Activated CD4-positive, alpha-beta T cell treated with anti-CD3 and anti-CD28 coated beads, Interleukin-2, amount 10 ng/mL, durations not matched to agents 24 days and 14 days (primary cell): ENCODE measurements at regions of chr12 and their contacts with region 1.

Region 1: GRCh38 chr12:89960011-89960507 is 251.4 kb upstream of the ATP2B1 start:
- DNase-seq: peak; percentile 63
- H3K4me3 Mint-ChIP-seq: peak overlapping the region; percentile 39
- H3K27ac Mint-ChIP-seq: no peak overlapping the region
- H3K4me1 Mint-ChIP-seq: peaks cover 12% of the 10 kb centered on the region
- H3K27me3 Mint-ChIP-seq: peaks cover 10% of the 10 kb centered on the region

Region 2: DNA sequence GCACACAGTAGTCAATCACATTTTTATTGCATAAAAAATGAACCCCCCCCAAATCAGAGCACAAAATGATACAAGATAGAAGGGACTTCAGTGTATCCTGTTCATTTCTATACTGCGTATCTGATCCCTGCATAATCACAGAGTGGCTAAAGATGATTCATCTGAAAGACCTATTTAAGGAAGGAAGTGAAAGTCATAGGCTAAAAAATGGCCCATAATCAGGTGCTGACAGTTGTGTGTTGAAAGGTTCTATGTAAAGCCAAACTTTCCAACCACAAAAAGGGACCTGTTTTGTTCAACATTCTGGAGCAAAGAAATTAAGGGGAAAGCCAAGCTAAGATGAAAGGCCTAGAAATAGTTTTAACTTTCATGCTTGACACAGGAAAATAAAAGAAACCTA is 103.6 kb before region 1 on chr12:
- intact Hi-C with region 1: loop called (anchors 1 kb)
- DNase-seq: peak; percentile 62
- H3K4me3 Mint-ChIP-seq: peak overlapping the region; percentile 3
- H3K27ac Mint-ChIP-seq: peak overlapping the region; percentile 56
- H3K4me1 Mint-ChIP-seq: peaks cover 42% of the 10 kb centered on the region
- H3K27me3 Mint-ChIP-seq: peaks cover 2% of the 10 kb centered on the region

Region 3: DNA sequence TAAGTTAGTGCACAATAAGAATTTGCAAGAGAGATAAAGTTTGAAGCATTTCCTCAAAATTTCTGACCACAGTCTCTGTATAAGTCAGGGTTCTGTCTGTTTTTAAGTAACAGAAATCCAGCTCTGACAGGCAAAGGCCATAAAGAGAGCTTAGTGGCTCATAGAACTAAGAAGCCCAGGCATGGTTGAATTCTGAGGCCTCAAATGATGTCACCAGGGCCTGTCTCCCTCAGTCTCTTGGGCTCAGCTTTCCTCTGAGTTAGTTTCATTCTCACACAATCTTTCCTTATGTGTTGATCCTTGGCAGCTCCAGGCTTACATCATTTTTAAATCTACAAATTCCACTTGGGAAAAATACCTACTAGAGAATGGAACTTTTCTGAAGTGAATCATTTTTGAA is 78.0 kb before region 1 on chr12:
- intact Hi-C with region 1: loop called (anchors 2 kb)
- DNase-seq: peak; percentile 71
- H3K4me3 Mint-ChIP-seq: peak overlapping the region; percentile 20
- H3K27ac Mint-ChIP-seq: peak overlapping the region; percentile 78
- H3K4me1 Mint-ChIP-seq: peaks cover 29% of the 10 kb centered on the region
- H3K27me3 Mint-ChIP-seq: no peaks in the 10 kb centered on the region

Region 4: DNA sequence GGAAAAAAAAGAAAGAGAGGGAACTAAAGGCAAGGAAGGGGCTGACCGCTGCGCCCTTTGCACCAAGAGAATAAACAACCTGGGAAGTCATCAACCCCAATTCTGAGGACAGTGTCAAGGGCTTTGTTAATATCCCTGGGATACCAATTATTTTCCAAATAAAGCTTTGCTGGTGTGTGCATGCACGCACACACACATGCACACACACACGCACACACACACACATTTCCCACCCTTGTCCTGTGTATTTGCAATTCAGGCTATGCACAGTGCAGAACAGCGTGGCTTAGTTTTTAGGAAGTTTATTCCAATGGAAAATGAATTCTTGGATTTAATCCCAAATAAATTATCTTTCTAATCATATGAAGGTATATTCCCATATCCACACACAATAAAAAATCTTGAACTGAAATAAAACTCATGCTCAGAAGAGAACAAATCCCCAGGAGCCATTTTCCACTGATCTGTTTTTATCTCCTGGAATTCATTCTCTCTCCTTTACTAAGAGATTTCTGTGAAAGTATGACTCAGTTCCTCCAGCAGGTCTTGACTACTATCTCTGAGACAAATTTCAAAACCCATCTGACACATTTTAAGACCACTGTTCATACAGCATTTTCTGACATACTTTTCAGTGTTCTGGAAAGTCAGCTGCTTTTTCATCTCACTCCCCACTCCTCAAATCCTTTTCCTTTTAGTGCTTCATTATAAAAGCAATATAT is 83.0 kb after region 1 on chr12:
- intact Hi-C with region 1: loop called (anchors 10 kb)
- DNase-seq: no peak
- H3K4me3 Mint-ChIP-seq: no peak overlapping the region
- H3K27ac Mint-ChIP-seq: no peak overlapping the region
- H3K4me1 Mint-ChIP-seq: peaks cover 12% of the 10 kb centered on the region
- H3K27me3 Mint-ChIP-seq: no peaks in the 10 kb centered on the region